Activated T-helper 1 cell treated with anti-CD3 and anti-CD28 coated beads, Interleukin-12 subunit alpha, Interleukin-12 subunit beta, Interleukin-2, Interleukin-4 antibody, amounts not matched to agents 30 ng/mL and 10 ng/mL and 1 ng/mL, durations not matched to agents 14 hours and 24 hours and 36 hours (primary cell): ENCODE measurements at regions of chr14 and their contacts with region 1.

Region 1: GRCh38 chr14:105281371-105282097 is 19.3 kb downstream of the BRF1 start:
- DNase-seq: no peak
- H3K4me3 Mint-ChIP-seq: no peak overlapping the region
- H3K27ac Mint-ChIP-seq: no peak overlapping the region
- H3K4me1 Mint-ChIP-seq: peaks cover 31% of the 10 kb centered on the region
- H3K27me3 Mint-ChIP-seq: no peaks in the 10 kb centered on the region

Region 2: GRCh38 chr14:105203057-105203531 is 78.4 kb before region 1 on chr14:
- intact Hi-C with region 1: loop called (anchors 1 kb)
- DNase-seq: peak; percentile 55
- H3K4me3 Mint-ChIP-seq: no peak overlapping the region
- H3K27ac Mint-ChIP-seq: no peak overlapping the region
- H3K4me1 Mint-ChIP-seq: peaks cover 5% of the 10 kb centered on the region
- H3K27me3 Mint-ChIP-seq: no peaks in the 10 kb centered on the region